Heart right ventricle (tissue), 16 donors: ENCODE measurements at regions of chr3 and their contacts with region 1.

Region 1: GRCh38 chr3:69665026-69665737 is 74.1 kb upstream of the MITF start:
- DNase-seq: peak in 1 of 2 donors; percentile 61
- ATAC-seq: peak; percentile 73 to 94 (median 91)
- H3K4me3 ChIP-seq: no peak overlapping the region
- H3K27ac ChIP-seq: peak overlapping the region in 8 of 10 donors; percentile 14 to 67 (median 38)
- H3K4me1 ChIP-seq: peaks cover 0 to 27% (median 19%) of the 10 kb centered on the region in 9 donors
- H3K27me3 ChIP-seq: no peaks in the 10 kb centered on the region
- CTCF ChIP-seq: no peak

Region 2: DNA sequence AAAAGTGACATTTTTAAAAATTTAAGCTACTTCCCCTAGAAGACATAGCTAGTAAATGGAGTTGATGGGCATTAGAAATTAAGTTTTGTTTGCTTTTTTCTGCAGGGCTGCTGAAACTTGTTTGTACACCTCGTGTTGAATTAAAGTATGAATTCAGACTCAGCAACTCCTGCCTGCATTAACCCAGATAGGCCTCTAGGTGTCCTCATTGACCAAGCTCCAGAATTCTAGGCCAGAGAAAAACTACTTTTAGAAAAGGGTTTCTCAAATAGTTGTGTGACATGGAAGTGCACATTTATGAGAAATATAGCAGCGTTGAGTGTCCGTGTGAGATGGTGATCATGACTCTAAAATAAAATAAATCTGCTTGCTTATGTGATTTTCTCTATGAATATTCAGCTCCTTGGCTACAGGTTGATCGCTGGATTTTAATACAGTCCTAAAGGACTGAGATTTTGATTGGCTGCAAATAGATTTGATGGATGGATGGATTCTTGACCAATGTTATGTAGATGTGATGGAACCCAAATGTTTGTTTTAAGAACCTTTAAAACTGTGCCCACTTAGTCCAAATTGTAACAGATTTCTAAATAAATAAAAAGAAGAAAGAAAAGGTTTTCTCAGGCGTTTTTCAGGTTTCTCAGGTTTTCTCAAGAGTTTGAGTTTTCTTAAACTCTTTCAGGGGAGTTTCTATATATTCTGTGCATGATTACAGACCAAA is 503.4 kb before region 1 on chr3:
- intact Hi-C with region 1: loop called (anchors 2 to 10 kb)
- DNase-seq: peak in 1 of 2 donors; percentile 25
- ATAC-seq: peak in 7 of 8 donors; percentile 25 to 65 (median 56)
- H3K4me3 ChIP-seq: no peak overlapping the region
- H3K27ac ChIP-seq: no peak overlapping the region
- H3K4me1 ChIP-seq: peaks cover 0 to 8% (median 0%) of the 10 kb centered on the region in 9 donors
- H3K27me3 ChIP-seq: no peaks in the 10 kb centered on the region
- CTCF ChIP-seq: peak; percentile 83 to 100 (median 95)

Region 3: GRCh38 chr3:69451594-69451993 is 213.6 kb before region 1 on chr3:
- intact Hi-C with region 1: loop called in 5 of 10 experiments (anchors 5 to 10 kb)
- DNase-seq: no peak
- ATAC-seq: peak in 3 of 8 donors; percentile 37 to 74 (median 56)
- H3K4me3 ChIP-seq: no peak overlapping the region
- H3K27ac ChIP-seq: no peak overlapping the region
- H3K4me1 ChIP-seq: peaks cover 0 to 23% (median 6%) of the 10 kb centered on the region in 9 donors
- H3K27me3 ChIP-seq: no peaks in the 10 kb centered on the region
- CTCF ChIP-seq: peak in 6 of 9 donors; percentile 14 to 40 (median 24)

Region 4: DNA sequence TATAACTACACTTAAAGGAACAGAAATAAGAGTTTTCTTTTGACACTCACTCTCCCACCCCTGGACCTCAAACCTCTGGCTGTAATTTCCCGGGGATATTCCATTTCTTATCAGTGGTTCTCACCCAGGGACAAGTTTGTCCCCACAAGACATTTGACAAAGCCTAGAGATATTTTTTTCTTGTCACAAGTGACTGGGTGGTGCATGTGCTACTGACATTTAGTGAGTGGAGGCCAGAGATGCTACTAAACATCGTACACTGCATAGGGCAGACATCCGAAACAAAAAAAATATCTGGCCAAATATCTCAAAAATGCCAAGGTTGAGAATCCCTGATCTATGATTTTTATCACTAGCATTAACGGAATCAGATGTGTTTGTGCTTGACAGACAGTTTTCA is 111.3 kb before region 1 on chr3:
- intact Hi-C with region 1: loop called in 4 of 10 experiments (anchors 5 to 10 kb)
- DNase-seq: no peak
- ATAC-seq: peak in 1 of 8 donors; percentile 7
- H3K4me3 ChIP-seq: no peak overlapping the region
- H3K27ac ChIP-seq: no peak overlapping the region
- H3K4me1 ChIP-seq: peaks cover 0 to 35% (median 17%) of the 10 kb centered on the region in 9 donors
- H3K27me3 ChIP-seq: no peaks in the 10 kb centered on the region
- CTCF ChIP-seq: no peak

Region 5: DNA sequence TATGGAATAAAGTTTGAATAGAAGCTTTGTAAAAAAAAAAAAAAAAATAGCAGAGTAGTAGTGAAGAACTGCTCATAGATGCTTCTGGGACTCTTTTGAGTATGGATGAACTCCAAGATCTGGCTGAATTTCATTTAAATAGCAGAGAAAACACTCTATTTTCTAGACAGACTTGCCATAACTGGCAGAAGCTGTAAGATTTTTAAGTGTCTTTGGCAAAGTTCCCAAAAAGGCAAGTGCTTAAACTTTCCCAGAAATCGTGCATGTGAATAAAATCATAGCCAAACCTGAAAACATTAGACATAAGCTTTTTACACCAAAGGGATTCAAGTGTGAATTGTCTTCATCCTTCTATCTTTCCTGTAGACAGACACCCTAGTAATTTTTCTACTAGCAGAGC is 36.2 kb before region 1 on chr3:
- intact Hi-C with region 1: loop called in 1 of 10 experiments (anchors 2 kb)
- DNase-seq: no peak
- ATAC-seq: no peak
- H3K4me3 ChIP-seq: no peak overlapping the region
- H3K27ac ChIP-seq: no peak overlapping the region
- H3K4me1 ChIP-seq: no peaks in the 10 kb centered on the region
- H3K27me3 ChIP-seq: no peaks in the 10 kb centered on the region
- CTCF ChIP-seq: no peak